ENCODE measurements at regions of chr9 and their contacts with region 1.

Region 1: GRCh38 chr9:93095205-93096130 is 549 bp upstream of the CARD19 start:
- DNase-seq: peak; percentile 100
- H3K4me3 Mint-ChIP-seq: peak overlapping the region; percentile 89
- H3K27ac Mint-ChIP-seq: peak overlapping the region; percentile 99
- H3K4me1 Mint-ChIP-seq: peaks cover 73% of the 10 kb centered on the region
- H3K27me3 Mint-ChIP-seq: no peaks in the 10 kb centered on the region

Region 2: DNA sequence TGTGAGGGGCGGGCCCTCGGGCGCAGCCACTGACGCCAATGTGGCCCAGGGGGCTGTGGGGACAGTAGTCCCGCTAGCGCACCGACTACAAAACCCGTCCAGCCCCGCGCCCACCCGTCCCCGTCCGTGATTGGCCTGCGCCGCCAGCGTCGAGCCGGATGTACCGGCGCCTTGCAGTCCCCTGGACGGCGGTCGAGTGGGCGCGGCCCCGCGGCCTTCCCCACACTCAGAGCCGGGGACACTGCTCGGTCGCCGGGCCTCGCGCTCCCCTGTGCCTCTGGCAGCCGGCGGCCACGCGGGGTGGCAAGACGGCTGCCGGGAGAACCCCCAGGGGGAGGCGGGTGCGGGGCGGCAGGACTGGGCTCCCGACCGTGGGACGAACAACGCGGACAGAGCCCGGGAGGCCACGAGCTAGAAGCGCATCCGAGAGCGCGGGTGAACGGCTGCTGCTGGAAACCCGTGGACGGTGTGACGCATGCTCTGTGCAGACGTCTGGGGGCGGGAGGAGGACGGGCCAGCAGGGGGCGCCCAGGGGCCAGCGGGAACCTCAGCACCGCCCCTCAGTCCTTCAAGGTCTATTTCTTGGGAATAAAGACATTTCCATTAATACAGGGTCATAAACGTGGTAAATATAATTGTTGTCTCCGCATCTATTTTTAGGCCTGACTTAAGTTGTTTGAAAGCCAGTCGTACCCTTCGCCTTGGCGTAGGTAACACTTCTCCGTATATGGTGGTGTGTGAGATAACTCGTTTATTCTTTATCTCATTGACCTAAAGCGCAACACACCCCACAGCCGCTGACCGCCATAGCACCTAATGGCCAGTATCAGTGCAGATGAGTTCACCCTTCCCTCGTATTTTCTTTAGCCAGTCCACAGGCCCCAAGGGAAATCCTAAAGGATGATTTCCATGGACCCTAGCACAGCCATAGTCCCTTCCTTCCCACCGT is 330.2 kb before region 1 on chr9:
- intact Hi-C with region 1: loop called (anchors 2 kb)
- DNase-seq: peak; percentile 98
- H3K4me3 Mint-ChIP-seq: peak overlapping the region; percentile 86
- H3K27ac Mint-ChIP-seq: peak overlapping the region; percentile 92
- H3K4me1 Mint-ChIP-seq: peaks cover 45% of the 10 kb centered on the region
- H3K27me3 Mint-ChIP-seq: no peaks in the 10 kb centered on the region

Region 3: GRCh38 chr9:93003552-93004407 is 91.7 kb before region 1 on chr9:
- intact Hi-C with region 1: loop called (anchors 5 kb)
- DNase-seq: peak; percentile 51
- H3K4me3 Mint-ChIP-seq: no peak overlapping the region
- H3K27ac Mint-ChIP-seq: peak overlapping the region; percentile 63
- H3K4me1 Mint-ChIP-seq: peaks cover 38% of the 10 kb centered on the region
- H3K27me3 Mint-ChIP-seq: no peaks in the 10 kb centered on the region

Region 4: DNA sequence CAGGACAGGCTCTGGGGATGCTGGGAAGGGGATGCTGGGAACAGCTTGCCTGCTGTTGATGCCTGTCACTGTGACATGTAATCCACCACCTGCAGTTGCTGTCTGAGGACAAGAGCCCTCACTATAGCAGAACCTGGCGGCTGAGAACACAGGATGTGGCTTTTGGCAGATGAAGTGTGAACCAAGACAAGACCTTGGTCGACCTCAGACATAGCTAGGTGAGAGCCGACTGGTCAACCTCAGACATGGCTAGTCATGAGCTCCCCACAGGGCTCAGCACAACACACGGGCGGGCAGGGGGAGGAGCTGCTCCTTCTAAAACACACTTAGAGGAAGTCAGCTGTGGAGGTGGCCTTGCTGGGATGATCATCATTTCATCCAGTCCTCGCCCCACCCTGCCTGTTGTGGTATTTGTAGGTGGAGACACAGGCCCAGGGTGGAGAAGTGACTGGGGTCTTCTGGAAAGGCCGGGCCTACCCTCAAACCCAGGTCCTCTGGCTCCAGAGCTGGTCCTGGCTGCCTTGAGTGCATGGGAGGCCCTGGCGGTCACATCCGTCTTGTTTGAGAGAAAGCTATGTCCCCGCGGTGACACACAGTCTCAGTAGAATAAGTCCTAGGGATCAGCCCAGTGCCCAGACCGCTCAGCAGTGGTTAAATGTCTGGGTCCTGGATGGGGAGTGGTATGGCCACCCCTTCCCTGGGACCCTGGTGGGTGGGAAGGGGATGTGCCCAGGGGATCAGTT is 30.9 kb before region 1 on chr9:
- intact Hi-C with region 1: loop called (anchors 1 kb)
- DNase-seq: peak; percentile 91
- H3K4me3 Mint-ChIP-seq: peak overlapping the region; percentile 91
- H3K27ac Mint-ChIP-seq: peak overlapping the region; percentile 96
- H3K4me1 Mint-ChIP-seq: peaks cover 84% of the 10 kb centered on the region
- H3K27me3 Mint-ChIP-seq: no peaks in the 10 kb centered on the region

Region 5: DNA sequence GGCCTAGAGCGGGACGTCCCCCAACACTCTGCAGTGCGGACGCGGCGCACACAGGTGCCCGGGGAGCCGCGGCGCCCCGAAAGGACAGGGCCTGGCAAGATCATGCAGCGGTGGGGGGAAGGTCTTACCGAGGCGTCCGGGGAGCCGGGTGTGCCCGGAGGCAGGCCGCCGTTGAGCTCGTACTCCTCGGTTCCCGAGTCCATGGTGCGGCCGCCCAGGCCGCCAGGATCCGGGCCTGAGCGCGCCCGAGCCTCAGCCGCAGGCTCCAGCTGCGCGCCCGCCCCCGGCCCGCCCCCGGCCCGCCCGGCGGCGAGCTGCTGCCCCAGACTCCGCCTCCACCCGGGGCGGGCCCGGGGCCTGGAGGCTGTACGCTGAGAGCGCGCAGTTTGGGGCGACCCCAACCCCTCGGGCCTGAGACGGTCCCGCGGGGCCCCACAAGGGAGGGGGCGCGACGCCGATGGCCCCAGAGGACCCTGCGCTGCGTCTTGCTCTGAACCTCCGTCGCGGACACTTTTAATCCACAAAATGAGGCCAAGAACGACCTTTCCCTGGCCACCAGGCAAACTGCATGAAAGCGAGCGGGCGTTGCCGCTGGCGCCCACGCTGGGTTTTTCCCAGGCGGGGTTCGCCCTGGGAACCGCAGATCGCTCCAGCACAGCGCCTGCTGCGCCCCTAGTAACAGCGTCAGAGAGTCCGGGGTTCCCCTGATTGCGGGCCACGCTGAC is 38.7 kb after region 1 on chr9 and contains the start of gene NINJ1:
- intact Hi-C with region 1: loop called (anchors 1 kb)
- DNase-seq: peak; percentile 89
- H3K4me3 Mint-ChIP-seq: peak within 1 kb of the TSS; percentile 94
- H3K27ac Mint-ChIP-seq: peak within 1 kb of the TSS; percentile 96
- H3K4me1 Mint-ChIP-seq: peaks cover 57% of the 10 kb centered on the region
- H3K27me3 Mint-ChIP-seq: peaks cover 2% of the 10 kb centered on the region
- total RNA-seq, gene NINJ1: 94.2 and 95.3 TPM in 2 replicates

Region 6: GRCh38 chr9:93453047-93453914 is 357.8 kb after region 1 on chr9 and contains the start of gene FAM120AOS:
- intact Hi-C with region 1: loop called (anchors 1 kb)
- DNase-seq: peak; percentile 81
- H3K4me3 Mint-ChIP-seq: peak within 1 kb of the TSS; percentile 98
- H3K27ac Mint-ChIP-seq: peak within 1 kb of the TSS; percentile 95
- H3K4me1 Mint-ChIP-seq: peaks cover 51% of the 10 kb centered on the region
- H3K27me3 Mint-ChIP-seq: no peaks in the 10 kb centered on the region
- total RNA-seq, gene FAM120AOS: 31.2 and 38.8 TPM in 2 replicates